Psoas muscle (tissue), 8 donors: ENCODE measurements at regions of chr2 and their contacts with region 1.

Region 1: DNA sequence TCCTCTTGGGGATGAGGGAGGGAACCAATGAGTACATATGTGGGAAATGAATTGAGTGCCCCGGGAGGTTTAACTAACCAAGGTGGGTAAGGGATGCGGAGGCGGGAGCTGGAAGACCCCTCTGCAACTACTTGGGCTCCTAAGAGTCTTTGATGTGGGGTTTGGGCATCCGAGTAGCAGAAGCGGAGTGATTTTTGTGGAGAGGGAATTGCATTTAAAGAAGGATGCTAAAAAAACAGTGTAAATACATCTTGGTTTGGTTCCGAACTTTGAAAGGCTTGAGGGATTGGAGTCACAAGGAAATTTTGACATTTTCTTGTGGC is 215.7 kb downstream of the MCFD2 start:
- DNase-seq: no peak
- ATAC-seq: no peak
- H3K4me3 ChIP-seq: peak overlapping the region; percentile 85
- H3K27ac ChIP-seq: peak overlapping the region; percentile 92
- H3K4me1 ChIP-seq: peaks cover 39% of the 10 kb centered on the region
- H3K27me3 ChIP-seq: no peaks in the 10 kb centered on the region
- CTCF ChIP-seq: no peak

Region 2: DNA sequence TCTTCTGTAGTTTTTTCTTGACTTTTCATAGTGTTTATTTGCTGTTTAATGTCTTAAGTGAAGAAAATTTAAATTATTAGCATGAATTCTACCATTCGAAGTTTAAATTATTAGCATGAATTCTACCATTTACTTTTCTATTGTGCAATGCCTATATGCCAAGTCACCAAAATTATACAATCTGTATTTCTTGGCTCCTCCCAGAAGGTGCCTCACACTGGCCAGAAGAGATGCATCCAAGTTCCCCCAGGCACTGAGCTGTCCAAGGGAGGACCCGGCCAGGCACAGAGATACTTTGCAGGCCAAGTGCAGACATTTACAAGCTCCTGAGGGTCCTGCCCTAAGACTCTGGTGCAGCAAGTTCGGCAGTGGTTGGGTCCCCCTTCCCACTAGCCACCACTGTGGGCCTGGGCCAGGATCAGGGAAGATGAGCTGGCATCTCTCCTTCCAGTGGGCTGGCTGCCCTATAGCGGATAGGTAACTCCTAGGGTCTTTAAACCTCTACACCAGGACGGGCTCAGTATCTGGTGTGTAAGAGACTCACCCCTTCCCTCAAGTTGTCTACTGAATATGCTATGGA is 189.2 kb before region 1 on chr2:
- intact Hi-C with region 1: no loop called
- DNase-seq: no peak
- ATAC-seq: no peak
- H3K4me3 ChIP-seq: no peak overlapping the region
- H3K27ac ChIP-seq: no peak overlapping the region
- H3K4me1 ChIP-seq: no peaks in the 10 kb centered on the region
- H3K27me3 ChIP-seq: no peaks in the 10 kb centered on the region
- CTCF ChIP-seq: no peak

Region 3: DNA sequence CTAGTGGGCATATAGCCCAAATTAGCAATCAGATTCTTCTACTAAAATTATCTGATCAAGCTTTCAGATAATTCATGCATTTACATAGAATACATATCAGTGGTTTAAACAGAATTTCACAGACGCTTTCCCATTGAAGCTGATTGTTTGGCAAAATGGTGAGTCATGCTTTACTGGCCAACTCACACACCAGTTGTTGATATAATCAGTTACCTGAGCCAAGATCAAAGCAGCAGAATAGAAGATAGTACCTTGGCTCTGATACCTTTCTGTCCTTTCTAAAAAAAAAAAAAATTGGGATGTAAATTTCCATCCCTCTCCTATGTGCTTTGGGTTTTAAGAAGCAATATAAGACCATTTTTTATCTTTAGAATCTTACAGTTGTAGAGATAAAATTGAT is 37.7 kb after region 1 on chr2:
- intact Hi-C with region 1: loop called in 1 of 2 experiments (anchors 5 kb)
- DNase-seq: no peak
- ATAC-seq: peak in 2 of 4 donors; percentile 48 to 57
- H3K4me3 ChIP-seq: no peak overlapping the region
- H3K27ac ChIP-seq: no peak overlapping the region
- H3K4me1 ChIP-seq: peaks cover 43% of the 10 kb centered on the region
- H3K27me3 ChIP-seq: no peaks in the 10 kb centered on the region
- CTCF ChIP-seq: no peak

Region 4: DNA sequence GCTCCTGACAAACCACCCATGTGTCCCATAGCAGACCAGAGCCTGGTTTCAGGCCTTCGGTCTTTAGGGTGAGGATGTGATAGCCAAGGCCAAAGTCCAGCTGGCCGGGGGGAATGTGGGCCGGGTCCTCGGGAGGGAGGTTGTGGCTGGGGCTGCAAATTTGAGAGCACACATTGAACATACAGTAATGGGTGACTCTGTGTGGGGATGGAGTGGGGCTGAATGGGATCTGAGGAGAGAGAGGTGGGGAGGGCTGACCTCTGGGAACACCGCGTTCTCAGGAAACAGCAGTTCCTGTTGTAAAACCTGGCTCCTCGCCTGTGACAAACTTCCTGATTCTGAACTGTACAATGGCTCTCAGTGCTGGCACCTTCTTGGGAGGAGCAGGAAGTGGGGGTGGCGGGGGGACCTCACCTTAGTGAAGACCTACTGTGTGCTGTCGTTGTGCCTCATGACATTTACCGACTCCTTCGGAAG is 166.9 kb after region 1 on chr2:
- intact Hi-C with region 1: no loop called
- DNase-seq: peak in 1 of 2 donors; percentile 34
- ATAC-seq: peak in 3 of 4 donors; percentile 52 to 73 (median 60)
- H3K4me3 ChIP-seq: no peak overlapping the region
- H3K27ac ChIP-seq: peak overlapping the region; percentile 67
- H3K4me1 ChIP-seq: no peaks in the 10 kb centered on the region
- H3K27me3 ChIP-seq: no peaks in the 10 kb centered on the region
- CTCF ChIP-seq: no peak